Lower lobe of right lung (tissue), 2 donors: ENCODE measurements at regions of chr6 and their contacts with region 1.

Region 1: DNA sequence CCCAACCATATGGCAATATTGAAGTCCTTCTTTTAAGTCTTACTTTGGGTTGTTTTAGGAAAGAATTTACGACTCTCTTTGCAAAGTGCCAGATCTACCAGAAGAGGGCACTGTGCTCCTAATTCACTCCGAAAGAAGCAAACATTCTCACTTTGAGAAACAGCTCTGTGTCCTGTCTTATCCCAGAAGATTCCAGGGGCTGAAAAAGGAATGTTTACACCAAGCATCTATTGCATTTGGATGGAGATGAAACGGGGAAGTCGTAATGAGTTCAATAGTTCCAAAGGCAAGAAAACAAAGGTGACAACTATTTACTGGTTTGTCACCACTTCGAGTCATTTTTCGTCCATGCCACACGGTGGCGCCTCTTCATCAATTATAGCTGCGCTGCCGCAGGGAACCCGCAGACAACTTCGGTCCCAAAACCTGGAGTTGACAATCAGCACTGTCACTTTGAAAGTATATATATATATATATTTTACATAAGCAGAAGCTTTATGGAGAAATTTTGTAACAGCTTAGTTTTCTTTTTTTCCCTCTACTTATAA is 121.6 kb downstream of the MOXD1 start:
- DNase-seq: peak; percentile 75
- ATAC-seq: peak; percentile 86 to 94
- H3K4me3 ChIP-seq: peak overlapping the region; percentile 50
- H3K27ac ChIP-seq: no peak overlapping the region
- H3K4me1 ChIP-seq: no peaks in the 10 kb centered on the region
- H3K27me3 ChIP-seq: peaks cover 4% of the 10 kb centered on the region
- CTCF ChIP-seq: peak; percentile 86

Region 2: DNA sequence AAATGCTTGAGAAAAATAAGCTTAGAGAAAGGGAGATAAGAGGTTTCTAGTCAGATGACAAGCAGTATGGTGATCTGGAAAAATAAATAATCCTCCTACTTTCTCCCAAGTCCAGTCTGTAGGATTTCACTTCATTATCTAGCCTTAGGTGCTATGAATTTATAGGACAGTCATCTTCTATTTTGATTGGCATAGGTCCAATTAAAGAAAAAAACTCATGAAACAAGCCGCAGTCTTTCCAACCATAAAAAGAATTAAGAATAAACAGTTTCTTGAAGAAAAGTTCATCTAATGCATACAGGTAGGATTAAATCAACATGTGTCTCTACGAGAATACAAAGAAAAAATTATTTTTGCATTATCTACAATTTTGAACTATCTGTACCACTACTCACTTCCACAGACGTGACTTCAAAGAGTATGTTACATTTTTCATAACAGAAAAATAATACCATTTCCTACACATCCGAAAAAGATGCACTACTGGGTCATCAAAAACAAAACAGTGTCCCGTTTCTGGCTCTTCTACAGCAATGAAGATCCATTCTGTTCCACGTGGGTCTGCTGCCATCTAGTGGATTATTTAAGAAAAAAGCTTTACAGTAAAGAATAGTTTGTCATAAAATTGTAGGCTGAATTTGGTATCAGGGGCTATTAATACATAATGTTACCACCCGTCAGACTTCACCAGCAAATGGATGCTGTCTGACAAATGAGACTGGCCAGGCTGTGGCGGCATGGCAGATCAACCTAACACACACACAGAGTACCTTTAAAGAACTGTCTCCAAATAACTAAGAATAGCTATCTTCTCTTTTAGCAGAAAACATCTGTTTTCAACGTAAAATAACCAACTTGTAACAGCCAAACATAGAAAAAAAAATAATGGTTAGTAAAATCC is 204.4 kb after region 1 on chr6:
- intact Hi-C with region 1: loop called (anchors 10 kb)
- DNase-seq: no peak
- ATAC-seq: peak; percentile 70 to 74
- H3K4me3 ChIP-seq: no peak overlapping the region
- H3K27ac ChIP-seq: no peak overlapping the region
- H3K4me1 ChIP-seq: peaks cover 9% of the 10 kb centered on the region
- H3K27me3 ChIP-seq: no peaks in the 10 kb centered on the region
- CTCF ChIP-seq: peak; percentile 63